ENCODE measurements at regions of chr13 and their contacts with region 1.

Region 1: GRCh38 chr13:52665325-52665724 is 12.7 kb downstream of the SUGT1 start:
- DNase-seq: no peak
- H3K4me3 ChIP-seq: no peak overlapping the region
- CTCF ChIP-seq: no peak

Region 2: GRCh38 chr13:52677823-52678222 is 12.5 kb after region 1 on chr13:
- CTCF ChIA-PET with region 1: interaction called, 12 read pairs
- POLR2A ChIA-PET with region 1: no interaction called
- DNase-seq: no peak
- H3K4me3 ChIP-seq: no peak overlapping the region
- CTCF ChIP-seq: no peak

Region 3: DNA sequence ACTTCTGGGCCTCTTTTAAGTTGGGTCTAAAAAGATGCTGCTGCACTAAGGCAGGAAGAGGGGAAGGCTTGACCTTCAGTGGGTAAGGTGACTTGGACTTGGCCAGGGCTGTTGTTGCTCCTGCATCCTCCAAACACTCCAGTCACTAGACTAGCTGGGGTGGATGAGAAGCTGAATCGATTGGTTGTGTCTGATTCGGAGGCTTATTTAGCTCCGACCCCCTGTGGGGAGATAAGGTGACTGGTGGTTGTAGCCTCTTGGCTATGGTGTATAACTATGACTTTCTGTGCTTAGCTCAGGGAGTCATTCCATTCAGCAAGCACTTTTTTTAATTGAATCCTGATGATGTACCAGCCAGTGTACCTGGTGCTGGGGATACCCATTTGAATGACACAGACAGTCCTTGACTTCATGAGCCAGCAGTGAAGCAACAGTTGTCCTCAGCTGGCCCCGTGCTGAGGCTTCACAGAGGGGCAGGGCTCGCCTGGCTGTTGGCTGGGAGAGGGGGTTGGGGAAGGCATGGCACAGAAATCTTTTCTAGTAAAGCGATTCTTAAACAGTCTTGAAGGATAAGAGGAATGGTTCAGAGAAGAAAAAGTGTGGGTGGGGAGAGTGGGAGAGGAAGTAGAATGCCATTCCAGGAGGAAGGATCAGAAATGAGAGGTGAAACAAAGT is 173.2 kb after region 1 on chr13:
- CTCF ChIA-PET with region 1: no interaction called
- POLR2A ChIA-PET with region 1: no interaction called
- DNase-seq: no peak
- H3K4me3 ChIP-seq: no peak overlapping the region
- CTCF ChIP-seq: no peak

Measured in AG04449 (cell line).